Posterior vena cava (tissue), 2 donors: ENCODE measurements at regions of chr3 and their contacts with region 1.

Region 1: GRCh38 chr3:13532126-13532525 is 16.8 kb upstream of the FBLN2 start:
- DNase-seq: peak; percentile 88

Region 2: GRCh38 chr3:12658593-12659058 is 873.5 kb before region 1 on chr3:
- intact Hi-C with region 1: loop called in 1 of 2 experiments (anchors 5 kb)
- DNase-seq: no peak

Region 3: DNA sequence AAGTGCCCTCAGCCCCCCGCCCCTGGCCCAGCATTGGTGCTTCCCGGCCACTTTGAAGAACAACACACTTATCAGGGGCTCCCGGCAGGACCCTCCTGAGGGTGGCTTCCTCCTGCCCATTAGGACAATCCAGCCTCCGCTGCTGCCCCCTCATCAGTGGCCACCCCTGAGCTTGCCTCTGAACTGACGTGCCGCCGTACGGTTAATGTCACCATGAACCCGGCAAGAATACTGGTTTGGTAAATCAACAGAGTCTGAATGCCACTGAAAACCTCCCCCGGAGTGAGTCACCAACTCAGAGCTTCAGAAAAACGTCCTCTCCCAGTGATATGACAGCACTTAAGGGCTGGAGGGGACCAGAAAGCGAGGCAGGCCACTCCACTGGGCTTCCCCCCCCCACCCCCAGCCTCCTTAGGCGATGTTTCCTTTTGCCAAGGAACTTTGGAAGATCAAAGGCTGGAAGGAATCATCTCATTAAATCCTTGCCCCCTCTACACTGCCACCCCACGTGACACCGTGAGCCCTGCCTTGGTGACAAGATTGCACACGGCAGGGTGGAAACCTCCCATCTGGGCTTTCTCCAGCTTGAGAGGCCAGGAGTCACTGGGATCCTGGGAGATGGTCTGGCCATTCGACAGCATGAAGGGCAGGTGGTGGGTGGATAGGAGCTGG is 254.1 kb before region 1 on chr3:
- intact Hi-C with region 1: no loop called
- DNase-seq: peak; percentile 71

Region 4: DNA sequence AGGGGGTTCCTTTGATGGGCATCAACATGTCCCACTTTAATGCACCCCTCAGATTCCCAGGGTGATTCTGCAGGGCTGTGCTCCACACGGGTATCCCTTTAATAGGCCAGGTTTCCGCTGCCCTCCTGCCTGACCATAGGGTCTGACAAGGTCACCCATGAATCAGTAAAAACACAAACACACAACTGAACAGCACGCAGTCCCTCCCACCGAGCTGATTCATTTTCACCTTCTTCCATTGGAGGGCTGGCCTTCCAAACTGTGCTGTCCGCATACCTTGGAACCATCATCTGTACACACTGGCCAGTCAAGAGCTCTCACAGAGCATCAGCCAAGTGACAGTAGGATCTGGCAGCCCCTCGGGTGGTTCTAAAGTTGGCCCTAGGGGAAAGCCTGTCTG is 110.5 kb after region 1 on chr3:
- intact Hi-C with region 1: loop called in 1 of 2 experiments (anchors 1 kb)
- DNase-seq: no peak